ENCODE measurements at regions of chr3 and their contacts with region 1.

Region 1: GRCh38 chr3:148861277-148861869 is 3.7 kb upstream of the CPA3 start:
- DNase-seq: peak; percentile 54
- ATAC-seq: peak; percentile 77
- H3K4me3 ChIP-seq: no peak overlapping the region
- H3K27ac ChIP-seq: no peak overlapping the region
- H3K4me1 ChIP-seq: no peaks in the 10 kb centered on the region
- H3K27me3 ChIP-seq: peaks cover 5% of the 10 kb centered on the region
- CTCF ChIP-seq: peak; percentile 69
- POLR2A ChIP-seq: no peak
- RAD21 ChIP-seq: peak; percentile 84

Region 2: DNA sequence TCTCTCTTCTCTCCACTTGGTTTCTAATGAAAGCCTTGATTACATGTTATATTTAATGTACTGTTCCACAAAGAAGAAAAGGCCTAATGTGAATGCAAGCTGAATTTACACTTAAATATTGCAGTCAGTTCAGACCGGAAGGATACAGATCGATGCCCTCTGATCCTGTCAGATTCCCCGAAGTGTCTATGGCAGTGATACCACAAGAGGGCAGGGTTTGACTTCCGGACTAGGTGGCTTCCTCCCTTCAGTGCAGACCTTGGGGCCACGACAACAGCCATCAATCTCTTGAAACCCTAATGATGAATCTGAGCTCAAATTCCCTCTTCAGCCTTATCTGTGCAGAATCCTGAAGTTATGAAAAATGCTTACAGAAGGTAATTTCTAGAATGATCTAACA is 134.1 kb before region 1 on chr3:
- CTCF ChIA-PET with region 1: interaction called, 4 read pairs
- POLR2A ChIA-PET with region 1: no interaction called
- dilution Hi-C with region 1: no loop called
- in situ Hi-C with region 1: no loop called
- intact Hi-C with region 1: loop called (anchors 5 kb)
- DNase-seq: no peak
- ATAC-seq: no peak
- H3K4me3 ChIP-seq: no peak overlapping the region
- H3K27ac ChIP-seq: no peak overlapping the region
- H3K4me1 ChIP-seq: no peaks in the 10 kb centered on the region
- H3K27me3 ChIP-seq: peaks cover 5% of the 10 kb centered on the region; the same call in 1 of the 2 replicates
- CTCF ChIP-seq: 0 out of 2 replicates have a peak, but pooled peaks have one; percentile 22
- POLR2A ChIP-seq: no peak
- RAD21 ChIP-seq: peak; percentile 23; the same call in 1 of the 2 replicates

Measured in IMR-90 (cell line).